ENCODE measurements at regions of chr5 and their contacts with region 1.

Region 1: GRCh38 chr5:149442563-149443182 is 63.6 kb upstream of the IL17B start:
- DNase-seq: peak; percentile 74
- H3K4me3 ChIP-seq: no peak overlapping the region
- H3K27ac ChIP-seq: peak overlapping the region in 1 of 2 donors; percentile 86
- H3K4me1 ChIP-seq: peaks cover 4% of the 10 kb centered on the region
- H3K27me3 ChIP-seq: no peaks in the 10 kb centered on the region
- CTCF ChIP-seq: peak; percentile 78 to 98 (median 95)
- POLR2A ChIP-seq: no peak

Region 2: DNA sequence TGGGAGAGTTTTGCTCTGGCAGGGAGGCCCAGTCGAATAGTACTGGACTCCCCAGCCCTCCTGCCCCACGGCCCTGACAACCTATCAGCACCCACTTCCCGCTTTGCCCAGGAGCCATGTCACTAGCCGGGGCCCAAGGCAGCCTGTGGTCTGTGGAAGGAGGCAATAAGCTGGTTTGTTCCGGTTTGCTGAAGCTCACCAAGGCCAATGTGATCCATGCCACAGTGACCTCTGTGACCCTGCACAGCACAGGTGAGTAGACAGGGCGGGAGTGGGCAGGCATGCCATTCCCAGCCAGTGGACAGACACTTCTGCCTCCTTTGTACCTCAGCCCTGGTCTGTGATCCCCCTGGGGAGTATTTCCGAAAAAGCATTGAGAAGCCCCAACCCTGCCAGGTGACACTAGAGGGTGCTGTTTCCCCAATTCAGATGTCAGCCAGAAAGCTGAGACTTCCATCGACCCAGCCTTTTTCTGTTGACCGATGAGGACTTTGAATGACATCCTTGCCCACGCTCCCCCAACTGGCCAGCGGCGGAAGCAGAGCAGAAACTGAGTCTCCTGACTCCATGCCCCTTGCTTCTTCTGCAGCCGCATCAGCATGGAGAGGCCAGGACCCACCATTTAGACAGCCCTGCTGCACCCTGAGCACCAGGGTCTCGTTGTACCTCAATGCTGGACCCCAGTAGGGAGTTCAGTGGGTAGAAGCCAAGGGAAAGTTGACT is 75.3 kb before region 1 on chr5:
- intact Hi-C with region 1: loop called (anchors 5 kb)
- DNase-seq: peak; percentile 52
- H3K4me3 ChIP-seq: no peak overlapping the region
- H3K27ac ChIP-seq: no peak overlapping the region
- H3K4me1 ChIP-seq: no peaks in the 10 kb centered on the region
- H3K27me3 ChIP-seq: no peaks in the 10 kb centered on the region
- CTCF ChIP-seq: peak; percentile 40 to 75 (median 64)
- POLR2A ChIP-seq: no peak

Region 3: DNA sequence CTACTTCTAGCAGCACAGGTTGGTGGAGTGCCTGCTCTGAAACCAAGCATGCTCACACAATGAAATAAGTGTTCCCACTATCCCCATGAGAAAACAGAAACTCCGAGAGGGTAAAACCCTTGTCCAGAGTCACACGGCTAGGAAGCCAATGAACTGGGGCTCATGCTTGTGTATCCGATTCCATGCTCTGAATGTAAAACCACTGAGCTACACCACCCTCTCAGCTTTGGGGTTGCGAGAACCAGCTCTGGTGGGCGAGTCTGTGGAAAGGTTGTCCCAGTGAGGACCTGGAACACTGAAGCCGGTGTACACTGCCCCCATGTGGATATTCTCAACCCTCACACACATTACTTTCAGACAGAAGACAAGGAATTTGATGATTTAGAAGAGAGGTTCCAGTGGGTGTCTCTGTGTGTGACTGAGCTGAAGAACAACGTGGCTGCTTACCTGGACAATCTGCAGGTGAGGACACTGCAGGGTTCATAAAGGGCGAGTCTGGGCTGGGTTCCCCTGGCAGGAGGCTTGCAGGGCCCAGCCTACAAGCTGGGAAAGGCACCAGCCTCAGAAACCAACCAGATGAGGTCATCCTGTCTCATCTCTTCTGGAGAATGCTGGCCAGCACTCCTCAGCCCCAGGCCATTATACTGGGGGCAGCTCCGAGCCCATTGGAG is 176.0 kb after region 1 on chr5:
- intact Hi-C with region 1: loop called (anchors 5 kb)
- DNase-seq: peak; percentile 36
- H3K4me3 ChIP-seq: no peak overlapping the region
- H3K27ac ChIP-seq: peak overlapping the region; percentile 13 to 38
- H3K4me1 ChIP-seq: peaks cover 4% of the 10 kb centered on the region
- H3K27me3 ChIP-seq: no peaks in the 10 kb centered on the region
- CTCF ChIP-seq: peak; percentile 40 to 76 (median 62)
- POLR2A ChIP-seq: no peak